ENCODE measurements at regions of chr11 and their contacts with region 1.

Region 1: GRCh38 chr11:102495161-102496042 is 35.1 kb downstream of the MMP7 start:
- DNase-seq: no peak
- ATAC-seq: peak; percentile 77 to 80
- H3K4me3 ChIP-seq: no peak overlapping the region
- H3K27ac ChIP-seq: no peak overlapping the region
- H3K4me1 ChIP-seq: no peaks in the 10 kb centered on the region
- H3K27me3 ChIP-seq: no peaks in the 10 kb centered on the region

Region 2: GRCh38 chr11:102220728-102221467 is 274.5 kb before region 1 on chr11:
- intact Hi-C with region 1: no loop called
- DNase-seq: no peak
- ATAC-seq: no peak
- H3K4me3 ChIP-seq: no peak overlapping the region
- H3K27ac ChIP-seq: no peak overlapping the region
- H3K4me1 ChIP-seq: peaks cover 4% of the 10 kb centered on the region
- H3K27me3 ChIP-seq: no peaks in the 10 kb centered on the region

Region 3: DNA sequence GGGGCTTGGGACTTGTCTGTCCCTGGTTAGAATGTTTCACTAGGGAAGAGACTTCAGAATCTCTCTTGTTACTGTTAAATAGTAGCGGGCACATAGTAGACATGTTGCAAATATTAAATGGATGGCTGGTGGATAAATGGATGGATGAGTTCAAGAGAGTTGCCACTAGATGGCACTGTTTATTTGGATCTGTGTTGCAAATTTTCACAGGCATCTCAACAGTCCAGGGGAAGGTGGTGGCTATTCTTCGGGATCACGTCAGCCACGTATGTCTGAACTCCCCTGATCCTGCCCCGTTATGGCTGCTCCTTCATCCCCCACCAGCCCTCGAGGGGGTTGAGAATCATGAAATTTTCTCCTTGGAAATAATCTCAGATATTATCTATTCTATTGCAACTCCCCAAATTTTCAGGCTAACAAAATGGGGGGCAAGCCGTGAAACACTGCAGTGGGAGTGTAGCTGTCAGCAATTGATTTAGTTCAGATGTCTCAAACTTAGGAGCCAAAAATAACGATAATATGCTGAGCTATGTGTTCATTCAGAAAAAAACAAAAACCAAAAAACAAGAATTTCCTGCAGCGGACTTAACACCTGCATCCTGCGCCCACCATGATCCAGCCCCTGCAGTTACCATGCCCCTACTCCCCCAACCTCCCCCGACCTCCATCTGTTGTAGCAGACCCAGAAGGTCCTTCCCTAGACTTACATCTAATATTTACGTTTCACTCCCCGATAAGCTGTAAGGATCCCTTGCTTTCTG is 207.3 kb before region 1 on chr11:
- intact Hi-C with region 1: loop called in 2 of 4 experiments (anchors 5 to 10 kb)
- DNase-seq: peak in 1 of 3 donors; percentile 56
- ATAC-seq: peak; percentile 88 to 90
- H3K4me3 ChIP-seq: peak overlapping the region; percentile 31
- H3K27ac ChIP-seq: no peak overlapping the region
- H3K4me1 ChIP-seq: no peaks in the 10 kb centered on the region
- H3K27me3 ChIP-seq: no peaks in the 10 kb centered on the region

Region 4: GRCh38 chr11:102341844-102342318 is 153.5 kb before region 1 on chr11:
- intact Hi-C with region 1: loop called (anchors 5 to 10 kb)
- DNase-seq: peak; percentile 65 to 81 (median 68)
- ATAC-seq: peak; percentile 62 to 66
- H3K4me3 ChIP-seq: no peak overlapping the region
- H3K27ac ChIP-seq: no peak overlapping the region
- H3K4me1 ChIP-seq: no peaks in the 10 kb centered on the region
- H3K27me3 ChIP-seq: no peaks in the 10 kb centered on the region

Region 5: DNA sequence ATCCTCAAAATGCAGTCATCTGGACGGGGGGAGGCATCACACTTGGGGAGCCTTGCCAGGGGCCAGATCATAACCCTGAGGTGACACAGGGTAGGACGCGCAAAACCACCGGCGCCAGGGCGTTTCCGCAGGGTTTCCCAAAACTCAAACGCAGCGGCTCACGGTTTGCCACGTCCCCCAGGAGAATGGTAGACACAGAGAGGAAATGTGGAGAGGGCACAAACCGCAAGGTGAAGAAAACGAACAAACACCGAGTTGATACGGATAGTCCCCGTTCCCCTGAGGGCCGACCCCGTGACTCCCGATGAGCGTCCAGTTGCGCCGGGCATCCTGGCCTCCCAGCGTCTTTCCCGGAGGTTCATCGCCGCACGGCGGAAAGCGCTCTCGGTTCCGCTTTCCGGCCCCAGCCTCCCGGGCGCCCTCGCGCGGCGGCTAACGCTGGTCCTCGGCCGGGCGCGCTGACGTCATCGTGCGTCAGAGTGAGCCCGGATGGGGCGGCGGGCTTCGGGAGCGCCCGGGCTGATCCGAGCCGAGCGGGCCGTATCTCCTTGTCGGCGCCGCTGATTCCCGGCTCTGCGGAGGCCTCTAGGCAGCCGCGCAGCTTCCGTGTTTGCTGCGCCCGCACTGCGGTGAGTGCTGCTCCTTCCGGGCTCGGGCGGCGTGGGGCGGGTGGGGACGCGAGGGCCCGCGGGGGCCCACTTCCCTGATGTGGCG is 148.5 kb before region 1 on chr11 and contains the start of gene BIRC2:
- intact Hi-C with region 1: loop called (anchors 5 to 10 kb)
- DNase-seq: peak; percentile 96 to 99 (median 98)
- ATAC-seq: peak; percentile 98
- H3K4me3 ChIP-seq: peak within 1 kb of the TSS; percentile 97
- H3K27ac ChIP-seq: peak within 1 kb of the TSS; percentile 89
- H3K4me1 ChIP-seq: no peaks in the 10 kb centered on the region
- H3K27me3 ChIP-seq: no peaks in the 10 kb centered on the region
- total RNA-seq, gene BIRC2: 29.6 to 35.0 (median 31.9) TPM

Region 6: GRCh38 chr11:102390667-102391465 is 104.5 kb before region 1 on chr11:
- intact Hi-C with region 1: loop called in 2 of 4 experiments (anchors 5 kb)
- DNase-seq: peak; percentile 57 to 75 (median 70)
- ATAC-seq: peak; percentile 81 to 90
- H3K4me3 ChIP-seq: no peak overlapping the region
- H3K27ac ChIP-seq: no peak overlapping the region
- H3K4me1 ChIP-seq: no peaks in the 10 kb centered on the region
- H3K27me3 ChIP-seq: no peaks in the 10 kb centered on the region

Measured in right cardiac atrium (tissue), 5 donors.